K562 (cell line): ENCODE measurements at regions of chr22 and their contacts with region 1.

Region 1: GRCh38 chr22:21641789-21642583 is at the start of gene SDF2L1:
- DNase-seq: peak; percentile 100
- ATAC-seq: peak; percentile 94
- H3K4me3 ChIP-seq: peak within 1 kb of the TSS; percentile 59
- H3K27ac ChIP-seq: peak within 1 kb of the TSS; percentile 83
- H3K4me1 ChIP-seq: peaks cover 31 to 57% of the 10 kb centered on the region in 2 experiments
- H3K27me3 ChIP-seq: no peaks in the 10 kb centered on the region; a peak in 1 of 5 replicates
- CTCF ChIP-seq: peak in 2 of 3 experiments; percentile 43 to 84; a peak in 3 of 6 replicates
- EP300 ChIP-seq: no peak; the same call in 1 of the 2 replicates
- POLR2A ChIP-seq: no peak
- RAD21 ChIP-seq: no peak
- polyA plus RNA-seq, gene SDF2L1: 15.1 to 34.8 TPM

Region 2: DNA sequence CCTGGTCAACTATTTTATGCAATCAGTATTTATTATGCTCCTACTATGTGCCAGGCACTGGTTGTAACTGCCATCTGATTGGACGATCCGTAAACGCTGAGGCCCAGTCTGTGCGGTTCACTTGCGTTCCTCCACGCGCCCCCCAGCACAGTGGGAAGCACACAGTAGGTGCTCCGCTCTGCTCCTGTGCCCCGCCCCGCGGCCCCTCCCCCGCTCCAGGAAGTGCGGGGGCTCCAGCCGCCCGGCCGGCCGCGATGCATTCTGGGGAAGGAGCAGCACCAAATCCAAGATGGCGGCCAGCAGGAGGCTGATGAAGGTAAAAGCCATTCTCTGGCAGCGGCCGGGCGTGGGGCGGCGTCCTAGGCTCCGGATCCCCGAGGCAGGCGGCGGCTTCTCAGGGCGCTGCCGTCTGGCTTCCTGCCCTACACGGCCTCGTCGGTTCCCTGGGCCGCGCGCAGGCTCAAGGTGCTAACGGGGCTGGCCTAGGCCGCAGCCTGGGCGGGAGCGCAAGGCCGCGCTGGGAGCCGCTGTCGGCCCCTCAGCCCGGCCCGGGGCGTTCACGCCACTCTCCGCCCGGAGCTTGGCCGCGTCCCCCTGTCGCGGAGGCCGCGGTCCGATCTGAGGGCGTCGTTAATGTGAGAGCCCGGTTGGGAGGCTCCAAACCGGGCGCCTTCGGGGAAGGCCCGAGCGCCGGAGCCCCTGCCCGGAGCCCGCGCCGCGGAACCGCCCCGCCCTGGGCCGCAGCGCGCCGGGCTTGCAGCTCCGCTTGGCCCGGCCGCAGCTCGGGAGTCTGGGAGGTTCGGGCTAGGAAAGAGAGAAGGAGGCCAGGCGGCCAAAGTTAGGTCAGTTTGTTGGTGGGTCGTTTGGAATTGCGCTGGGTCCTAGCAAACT is 74.3 kb before region 1 on chr22 and contains the start of gene UBE2L3:
- CTCF ChIA-PET with region 1: interaction called, 5 read pairs
- POLR2A ChIA-PET with region 1: interaction called, 4,622 read pairs
- in situ Hi-C with region 1: no loop called
- intact Hi-C with region 1: loop called (anchors 1 kb)
- DNase-seq: peak; percentile 100
- ATAC-seq: peak; percentile 82
- H3K4me3 ChIP-seq: peak within 1 kb of the TSS; percentile 72
- H3K27ac ChIP-seq: peak within 1 kb of the TSS; percentile 93
- H3K4me1 ChIP-seq: peaks cover 35 to 39% of the 10 kb centered on the region in 2 experiments
- H3K27me3 ChIP-seq: no peaks in the 10 kb centered on the region
- CTCF ChIP-seq: peak in 1 of 3 experiments; percentile 25; a peak in 2 of 6 replicates
- EP300 ChIP-seq: peak; percentile 81
- POLR2A ChIP-seq: no peak
- RAD21 ChIP-seq: peak in 1 of 2 experiments; percentile 27; a peak in 1 of 4 replicates
- polyA plus RNA-seq, gene UBE2L3: 575 to 625 TPM

Region 3: GRCh38 chr22:21593406-21594232 is 48.4 kb before region 1 on chr22:
- CTCF ChIA-PET with region 1: interaction called, 25 read pairs
- POLR2A ChIA-PET with region 1: interaction called, 4,622 read pairs
- in situ Hi-C with region 1: no loop called
- intact Hi-C with region 1: loop called (anchors 1 kb)
- DNase-seq: peak; percentile 87 to 92 (median 88)
- ATAC-seq: peak; percentile 89
- H3K4me3 ChIP-seq: no peak overlapping the region
- H3K27ac ChIP-seq: no peak overlapping the region
- H3K4me1 ChIP-seq: peaks cover 7 to 12% of the 10 kb centered on the region in 2 experiments; a peak in 4 of 5 replicates
- H3K27me3 ChIP-seq: no peaks in the 10 kb centered on the region; a peak in 1 of 5 replicates
- CTCF ChIP-seq: peak; percentile 96 to 100 (median 98)
- EP300 ChIP-seq: 0 out of 2 replicates have a peak, but pooled peaks have one; percentile 7
- POLR2A ChIP-seq: no peak
- RAD21 ChIP-seq: peak; percentile 53 to 97; a peak in 3 of 4 replicates

Region 4: GRCh38 chr22:21629262-21630149 is 12.5 kb before region 1 on chr22 and contains the start of gene YDJC:
- CTCF ChIA-PET with region 1: interaction called, 99 read pairs
- POLR2A ChIA-PET with region 1: interaction called, 4,622 read pairs
- in situ Hi-C with region 1: no loop called
- intact Hi-C with region 1: loop called (anchors 1 kb)
- DNase-seq: peak; percentile 100
- ATAC-seq: peak; percentile 83
- H3K4me3 ChIP-seq: peak within 1 kb of the TSS; percentile 59
- H3K27ac ChIP-seq: peak within 1 kb of the TSS; percentile 89
- H3K4me1 ChIP-seq: peaks cover 57 to 85% of the 10 kb centered on the region in 2 experiments
- H3K27me3 ChIP-seq: no peaks in the 10 kb centered on the region
- CTCF ChIP-seq: peak in 1 of 3 experiments; percentile 99; a peak in 2 of 6 replicates
- EP300 ChIP-seq: peak; percentile 90
- POLR2A ChIP-seq: no peak
- RAD21 ChIP-seq: no peak
- polyA plus RNA-seq, gene YDJC: 13.5 to 23.5 TPM

Region 5: DNA sequence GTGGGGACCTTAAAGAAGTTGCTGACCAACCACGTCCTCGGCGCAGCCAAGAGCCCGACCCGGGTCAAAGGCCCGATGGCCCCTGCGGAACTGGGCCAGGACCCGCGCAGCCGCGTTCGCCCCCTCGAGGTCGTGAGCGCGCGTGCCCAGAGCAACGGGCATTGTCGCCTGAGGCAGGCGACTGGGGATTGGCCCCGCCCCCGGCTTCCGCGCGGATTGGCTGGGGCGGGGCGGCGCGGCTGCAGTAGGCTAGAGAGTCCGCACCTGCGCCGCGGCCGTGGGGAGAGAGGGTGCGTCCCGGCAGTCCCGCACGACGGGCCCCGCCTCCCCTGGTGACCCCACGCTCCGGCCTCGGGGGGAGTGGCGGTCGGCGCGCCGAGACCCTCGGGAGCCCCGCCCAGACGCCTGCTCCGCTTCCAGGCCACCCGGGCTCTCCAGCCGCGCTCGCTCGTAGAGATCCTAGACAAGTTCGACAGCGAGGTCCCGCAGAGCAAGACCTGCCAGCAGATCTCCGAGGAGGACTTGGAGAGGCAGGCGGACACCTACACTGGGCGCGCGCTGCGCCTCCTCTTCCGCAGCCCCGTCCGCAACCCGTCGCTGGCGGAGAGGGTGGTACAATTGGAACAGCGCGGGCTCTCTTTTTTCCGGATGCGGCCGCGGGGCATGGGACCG is 15.5 kb after region 1 on chr22:
- CTCF ChIA-PET with region 1: interaction called, 3 read pairs
- POLR2A ChIA-PET with region 1: interaction called, 4,622 read pairs
- in situ Hi-C with region 1: no loop called
- intact Hi-C with region 1: no loop called
- DNase-seq: peak; percentile 100
- ATAC-seq: peak; percentile 95
- H3K4me3 ChIP-seq: peak overlapping the region; percentile 47
- H3K27ac ChIP-seq: peak overlapping the region; percentile 47
- H3K4me1 ChIP-seq: peaks cover 21 to 42% of the 10 kb centered on the region in 2 experiments
- H3K27me3 ChIP-seq: no peaks in the 10 kb centered on the region
- CTCF ChIP-seq: peak in 2 of 3 experiments; percentile 79 to 89; a peak in 4 of 6 replicates
- EP300 ChIP-seq: peak; percentile 19; the same call in 1 of the 2 replicates
- POLR2A ChIP-seq: no peak
- RAD21 ChIP-seq: no peak

Region 6: DNA sequence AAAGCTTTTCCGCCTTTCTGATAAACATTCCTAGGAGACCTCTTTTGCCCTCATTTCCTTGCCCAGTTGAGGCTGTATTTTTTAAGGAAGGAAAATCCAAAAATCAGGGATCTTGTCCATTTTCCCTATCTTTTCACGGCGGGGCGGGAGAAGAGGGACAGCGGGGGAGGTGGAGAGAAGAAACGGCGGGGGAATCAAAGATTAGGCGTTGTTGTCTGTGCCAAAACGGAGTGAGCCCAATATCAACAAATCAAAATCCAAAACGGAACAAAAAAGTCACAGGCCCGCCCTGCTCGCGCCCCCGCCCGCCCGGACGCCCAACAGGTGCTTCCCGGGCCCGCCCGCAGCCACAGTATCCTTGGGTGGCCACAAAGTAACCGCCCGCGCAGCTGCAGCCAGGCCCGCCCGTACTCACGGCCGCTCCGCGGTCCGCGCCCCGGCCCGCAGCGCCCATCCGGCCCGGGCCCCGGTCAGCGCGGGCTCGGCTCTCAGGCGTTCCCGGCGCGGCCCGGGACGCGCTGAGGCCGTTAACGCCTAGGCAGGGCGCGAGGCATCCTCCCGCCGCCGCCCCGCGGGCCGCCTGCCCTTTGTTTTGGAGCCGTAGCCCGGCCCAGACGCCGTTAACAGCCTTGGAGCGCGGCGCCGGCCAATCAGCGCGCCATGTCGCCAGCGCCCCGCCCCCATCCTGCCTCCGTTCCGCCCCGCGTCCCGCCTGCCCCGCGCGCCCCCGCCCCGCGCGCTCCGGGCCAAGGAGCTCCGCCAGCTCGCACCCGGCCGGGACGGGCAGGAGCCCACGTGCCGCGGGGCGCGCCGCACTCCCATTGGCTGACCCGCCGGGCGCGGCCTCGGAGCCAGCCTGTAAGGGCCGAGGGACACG is 93.5 kb after region 1 on chr22 and contains the start of gene YPEL1:
- CTCF ChIA-PET with region 1: no interaction called
- POLR2A ChIA-PET with region 1: interaction called, 11 read pairs
- in situ Hi-C with region 1: no loop called
- intact Hi-C with region 1: no loop called
- DNase-seq: peak; percentile 100
- ATAC-seq: peak; percentile 96
- H3K4me3 ChIP-seq: peak within 1 kb of the TSS; percentile 52
- H3K27ac ChIP-seq: peak within 1 kb of the TSS; percentile 42
- H3K4me1 ChIP-seq: peaks cover 17 to 29% of the 10 kb centered on the region in 2 experiments
- H3K27me3 ChIP-seq: peaks cover 52 to 57% of the 10 kb centered on the region in 2 experiments
- CTCF ChIP-seq: peak in 1 of 3 experiments; percentile 1; a peak in 2 of 6 replicates
- EP300 ChIP-seq: peak; percentile 43
- POLR2A ChIP-seq: no peak
- RAD21 ChIP-seq: peak in 1 of 2 experiments; percentile 59; a peak in 2 of 4 replicates
- polyA plus RNA-seq, gene YPEL1: 0.07 to 0.10 TPM